ENCODE measurements at regions of chr16 and their contacts with region 1.

Region 1: GRCh38 chr16:28211712-28212534 is at the start of gene XPO6:
- DNase-seq: peak; percentile 99
- ATAC-seq: peak; percentile 85
- H3K4me3 Mint-ChIP-seq: peak within 1 kb of the TSS; percentile 93
- H3K27ac Mint-ChIP-seq: peak within 1 kb of the TSS; percentile 93
- H3K4me1 Mint-ChIP-seq: peaks cover 24% of the 10 kb centered on the region
- H3K27me3 Mint-ChIP-seq: no peaks in the 10 kb centered on the region
- CTCF ChIP-seq: no peak
- total RNA-seq, gene XPO6: 250 to 253 TPM

Region 2: DNA sequence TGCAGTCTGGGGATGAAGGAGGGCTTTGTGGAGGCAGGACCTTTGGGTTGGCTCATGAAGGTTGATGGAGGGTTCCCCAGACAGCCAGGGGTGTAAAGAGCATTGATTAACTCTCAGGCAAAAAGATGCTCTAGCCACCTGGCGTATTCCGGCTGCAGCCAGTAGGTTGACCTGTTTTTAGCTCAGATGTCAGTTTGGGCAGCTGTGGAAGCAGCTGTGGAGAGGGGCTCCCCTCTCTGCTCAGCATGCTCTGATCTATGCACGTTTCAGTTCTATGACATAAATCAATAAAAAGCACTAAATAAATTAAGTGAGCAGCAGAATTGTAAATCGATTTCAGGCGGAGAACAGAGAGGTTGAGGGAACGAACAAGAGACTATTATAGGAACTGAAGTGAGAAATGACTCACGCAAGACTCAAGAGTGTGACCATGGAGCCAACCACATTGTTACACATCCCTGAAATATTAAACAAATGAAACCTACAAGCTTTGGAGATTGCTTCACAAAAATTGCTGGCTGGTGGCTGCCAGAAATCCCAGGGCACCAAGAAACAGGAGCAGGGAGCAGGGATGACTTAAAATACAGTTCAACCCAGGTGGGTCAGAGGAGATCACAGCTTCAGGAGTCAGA is 260.3 kb before region 1 on chr16:
- CTCF ChIA-PET with region 1: no interaction called
- POLR2A ChIA-PET with region 1: no interaction called
- intact Hi-C with region 1: no loop called
- DNase-seq: no peak
- ATAC-seq: no peak
- H3K4me3 Mint-ChIP-seq: no peak overlapping the region
- H3K27ac Mint-ChIP-seq: no peak overlapping the region
- H3K4me1 Mint-ChIP-seq: no peaks in the 10 kb centered on the region
- H3K27me3 Mint-ChIP-seq: peaks cover 28% of the 10 kb centered on the region
- CTCF ChIP-seq: no peak

Region 3: GRCh38 chr16:28140788-28141618 is 70.9 kb before region 1 on chr16:
- CTCF ChIA-PET with region 1: interaction called, 83 read pairs
- POLR2A ChIA-PET with region 1: interaction called, 9 read pairs
- intact Hi-C with region 1: loop called (anchors 5 kb)
- DNase-seq: peak; percentile 89
- ATAC-seq: peak; percentile 77
- H3K4me3 Mint-ChIP-seq: peak overlapping the region; percentile 61
- H3K27ac Mint-ChIP-seq: peak overlapping the region; percentile 94
- H3K4me1 Mint-ChIP-seq: peaks cover 80% of the 10 kb centered on the region
- H3K27me3 Mint-ChIP-seq: no peaks in the 10 kb centered on the region
- CTCF ChIP-seq: peak; percentile 54

Region 4: DNA sequence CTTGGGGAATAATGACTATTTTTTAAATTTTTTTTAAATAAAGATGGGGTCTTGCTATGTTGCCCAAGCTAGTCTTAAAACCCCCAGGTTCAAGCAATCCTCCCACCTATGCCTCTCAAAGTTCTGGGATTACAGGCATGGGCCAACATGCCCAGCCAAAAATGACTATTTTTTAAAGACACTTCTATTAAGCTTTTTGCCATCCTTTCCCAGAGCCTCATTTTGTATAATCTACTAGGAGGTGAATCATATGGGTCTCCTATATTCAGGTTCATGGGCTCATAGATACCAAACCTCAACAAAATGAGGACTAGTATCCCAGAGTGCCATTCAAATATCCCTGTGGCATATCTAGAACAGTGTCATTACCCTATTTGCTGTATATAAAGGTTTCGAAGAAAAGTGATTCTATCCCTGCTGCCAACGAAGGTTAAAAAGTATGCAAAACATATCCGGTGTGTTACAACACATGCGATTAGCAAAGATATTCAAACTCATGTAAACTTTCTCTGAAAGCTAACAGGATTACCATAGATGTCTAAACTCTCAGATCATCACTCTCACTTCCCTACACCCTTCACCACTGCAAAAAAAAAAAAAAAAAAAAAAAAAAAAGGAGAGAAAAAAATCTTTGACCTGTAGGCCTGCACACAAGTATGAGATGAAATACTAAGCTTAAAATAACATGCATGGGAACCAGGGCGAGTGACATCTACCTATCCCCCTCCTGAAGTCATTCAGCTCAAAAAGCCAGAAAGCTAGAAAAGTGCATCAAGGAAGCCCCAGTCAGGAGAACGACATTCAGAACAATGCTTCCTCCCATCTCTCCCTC is 23.6 kb before region 1 on chr16:
- CTCF ChIA-PET with region 1: interaction called, 12 read pairs
- POLR2A ChIA-PET with region 1: interaction called, 124 read pairs
- intact Hi-C with region 1: no loop called
- DNase-seq: no peak
- ATAC-seq: no peak
- H3K4me3 Mint-ChIP-seq: peak overlapping the region; percentile 34
- H3K27ac Mint-ChIP-seq: peak overlapping the region; percentile 93
- H3K4me1 Mint-ChIP-seq: peaks cover 86% of the 10 kb centered on the region
- H3K27me3 Mint-ChIP-seq: no peaks in the 10 kb centered on the region
- CTCF ChIP-seq: no peak

Region 5: DNA sequence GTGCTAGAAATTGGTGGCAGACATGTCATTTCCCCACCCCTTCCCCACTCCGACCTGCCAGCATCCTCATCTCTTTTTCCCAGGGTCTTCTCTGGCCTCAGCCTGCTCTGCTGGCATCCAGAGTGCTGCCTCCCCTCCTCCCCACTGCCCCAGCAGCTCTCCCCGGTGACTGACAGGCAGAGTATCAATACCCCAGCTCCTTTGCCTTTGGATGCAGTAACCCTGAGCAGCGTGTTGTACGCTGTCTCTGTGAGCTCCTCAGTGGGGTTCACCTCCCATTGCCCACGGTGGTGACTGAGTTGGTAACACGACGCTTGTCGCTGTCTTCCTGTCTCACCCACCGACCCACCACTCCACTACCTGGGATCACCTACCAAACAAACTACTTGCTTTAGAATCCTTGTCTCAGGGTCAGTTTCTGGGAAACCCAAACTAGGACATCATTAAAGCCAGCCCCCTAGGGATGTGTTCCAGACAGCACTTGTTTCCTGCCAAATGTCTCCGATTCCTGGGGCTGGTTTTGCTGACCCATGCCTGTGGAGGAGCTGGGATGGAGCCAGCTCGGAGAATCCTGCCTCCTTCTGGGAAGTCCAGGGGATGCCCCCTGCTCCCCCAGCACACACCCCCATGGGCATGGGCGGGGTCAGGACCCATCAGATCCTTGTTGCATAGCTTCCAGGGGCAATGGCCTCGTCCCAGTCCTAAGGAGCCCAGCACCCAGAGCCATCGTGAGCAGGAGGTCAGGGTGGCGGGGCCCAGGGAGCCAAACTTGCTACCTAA is 72.1 kb after region 1 on chr16:
- CTCF ChIA-PET with region 1: no interaction called
- POLR2A ChIA-PET with region 1: no interaction called
- intact Hi-C with region 1: no loop called
- DNase-seq: no peak
- ATAC-seq: no peak
- H3K4me3 Mint-ChIP-seq: no peak overlapping the region
- H3K27ac Mint-ChIP-seq: no peak overlapping the region
- H3K4me1 Mint-ChIP-seq: peaks cover 21% of the 10 kb centered on the region
- H3K27me3 Mint-ChIP-seq: no peaks in the 10 kb centered on the region
- CTCF ChIP-seq: no peak